ENCODE measurements at regions of chr12 and their contacts with region 1.

Region 1: GRCh38 chr12:120367233-120367923 is 1.6 kb downstream of the MSI1 start:
- DNase-seq: peak; percentile 65
- ATAC-seq: peak; percentile 7
- H3K4me3 Mint-ChIP-seq: peak overlapping the region; percentile 83
- H3K27ac Mint-ChIP-seq: peak overlapping the region; percentile 93
- H3K4me1 Mint-ChIP-seq: peaks cover 69% of the 10 kb centered on the region
- H3K27me3 Mint-ChIP-seq: peaks cover 29% of the 10 kb centered on the region
- CTCF ChIP-seq: peak; percentile 55

Region 2: DNA sequence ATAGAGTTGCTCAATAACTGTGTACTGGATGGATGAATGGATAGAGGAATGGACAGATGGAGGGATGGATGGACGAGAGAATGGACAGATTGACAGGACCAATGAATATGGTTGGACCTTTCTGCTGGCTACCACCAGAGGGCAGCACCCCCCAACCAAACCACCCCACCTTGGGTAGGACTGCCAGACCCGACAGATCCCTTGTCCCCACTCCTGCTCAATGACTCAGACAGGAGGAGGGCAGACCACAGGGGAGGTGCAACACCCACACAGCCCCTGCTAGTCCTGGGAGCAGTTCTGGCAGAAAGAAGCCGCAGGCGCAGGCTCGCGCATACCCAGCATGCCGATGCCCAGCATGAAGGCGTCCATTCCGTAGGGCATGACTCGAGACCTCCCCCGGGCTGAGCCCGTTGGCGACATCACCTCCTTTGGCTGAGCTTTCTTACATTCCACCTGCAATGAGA is 10.8 kb before region 1 on chr12:
- CTCF ChIA-PET with region 1: interaction called, 17 read pairs
- POLR2A ChIA-PET with region 1: interaction called, 6 read pairs
- DNase-seq: peak; percentile 86
- ATAC-seq: peak; percentile 60
- H3K4me3 Mint-ChIP-seq: no peak overlapping the region
- H3K27ac Mint-ChIP-seq: no peak overlapping the region
- H3K4me1 Mint-ChIP-seq: peaks cover 28% of the 10 kb centered on the region
- H3K27me3 Mint-ChIP-seq: no peaks in the 10 kb centered on the region
- CTCF ChIP-seq: peak; percentile 85

Region 3: DNA sequence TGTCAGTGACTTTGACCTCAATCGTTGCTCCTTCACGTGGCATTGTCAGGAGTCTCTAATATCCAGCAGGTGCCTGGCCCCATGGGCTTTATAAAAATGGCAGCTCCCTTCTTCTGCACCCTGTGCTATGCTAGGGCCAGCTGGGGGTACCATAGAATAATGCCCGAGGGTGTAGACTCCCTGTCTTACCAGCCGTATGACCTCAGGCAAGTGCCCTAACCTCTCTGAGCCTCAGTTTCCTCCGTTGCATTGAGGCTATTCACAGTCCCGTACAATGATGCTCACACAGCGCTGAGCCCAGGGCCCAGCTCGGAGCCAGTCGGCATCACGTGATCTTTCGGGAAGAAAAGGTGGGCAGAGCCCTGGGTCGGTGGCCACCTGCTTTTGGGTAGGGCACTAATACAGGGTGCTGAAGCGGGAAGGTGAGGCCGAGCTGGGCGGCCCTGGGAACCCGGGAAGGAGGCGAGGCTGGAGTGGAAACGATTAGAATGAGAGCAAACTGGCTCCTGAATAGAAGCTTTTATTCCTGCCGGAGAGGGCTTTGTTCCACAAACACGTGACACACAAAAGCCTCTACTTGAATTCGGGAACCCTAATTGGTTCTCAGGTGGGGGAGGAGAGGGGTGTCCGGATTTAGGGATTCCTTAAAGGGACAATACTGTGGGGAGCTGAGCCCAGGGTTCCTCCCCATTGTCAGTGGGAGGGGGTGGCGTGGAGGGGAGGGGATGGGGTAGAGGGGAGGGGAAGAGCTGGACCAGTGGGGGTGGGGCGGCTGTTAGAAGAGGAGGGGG is 21.5 kb after region 1 on chr12:
- CTCF ChIA-PET with region 1: interaction called, 25 read pairs
- POLR2A ChIA-PET with region 1: interaction called, 14 read pairs
- DNase-seq: peak; percentile 79
- ATAC-seq: peak; percentile 87
- H3K4me3 Mint-ChIP-seq: peak overlapping the region; percentile 66
- H3K27ac Mint-ChIP-seq: peak overlapping the region; percentile 96
- H3K4me1 Mint-ChIP-seq: peaks cover 33% of the 10 kb centered on the region
- H3K27me3 Mint-ChIP-seq: no peaks in the 10 kb centered on the region
- CTCF ChIP-seq: no peak

Region 4: GRCh38 chr12:120402217-120402616 is 34.8 kb after region 1 on chr12:
- CTCF ChIA-PET with region 1: interaction called, 24 read pairs
- POLR2A ChIA-PET with region 1: interaction called, 5 read pairs
- DNase-seq: peak; percentile 61
- ATAC-seq: peak; percentile 87
- H3K4me3 Mint-ChIP-seq: peak overlapping the region; percentile 56
- H3K27ac Mint-ChIP-seq: peak overlapping the region; percentile 94
- H3K4me1 Mint-ChIP-seq: peaks cover 23% of the 10 kb centered on the region
- H3K27me3 Mint-ChIP-seq: no peaks in the 10 kb centered on the region
- CTCF ChIP-seq: no peak

Region 5: GRCh38 chr12:120429368-120429767 is 62.0 kb after region 1 on chr12:
- CTCF ChIA-PET with region 1: interaction called, 74 read pairs
- POLR2A ChIA-PET with region 1: interaction called, 15 read pairs
- DNase-seq: no peak
- ATAC-seq: no peak
- H3K4me3 Mint-ChIP-seq: no peak overlapping the region
- H3K27ac Mint-ChIP-seq: no peak overlapping the region
- H3K4me1 Mint-ChIP-seq: peaks cover 8% of the 10 kb centered on the region
- H3K27me3 Mint-ChIP-seq: no peaks in the 10 kb centered on the region
- CTCF ChIP-seq: no peak

Region 6: DNA sequence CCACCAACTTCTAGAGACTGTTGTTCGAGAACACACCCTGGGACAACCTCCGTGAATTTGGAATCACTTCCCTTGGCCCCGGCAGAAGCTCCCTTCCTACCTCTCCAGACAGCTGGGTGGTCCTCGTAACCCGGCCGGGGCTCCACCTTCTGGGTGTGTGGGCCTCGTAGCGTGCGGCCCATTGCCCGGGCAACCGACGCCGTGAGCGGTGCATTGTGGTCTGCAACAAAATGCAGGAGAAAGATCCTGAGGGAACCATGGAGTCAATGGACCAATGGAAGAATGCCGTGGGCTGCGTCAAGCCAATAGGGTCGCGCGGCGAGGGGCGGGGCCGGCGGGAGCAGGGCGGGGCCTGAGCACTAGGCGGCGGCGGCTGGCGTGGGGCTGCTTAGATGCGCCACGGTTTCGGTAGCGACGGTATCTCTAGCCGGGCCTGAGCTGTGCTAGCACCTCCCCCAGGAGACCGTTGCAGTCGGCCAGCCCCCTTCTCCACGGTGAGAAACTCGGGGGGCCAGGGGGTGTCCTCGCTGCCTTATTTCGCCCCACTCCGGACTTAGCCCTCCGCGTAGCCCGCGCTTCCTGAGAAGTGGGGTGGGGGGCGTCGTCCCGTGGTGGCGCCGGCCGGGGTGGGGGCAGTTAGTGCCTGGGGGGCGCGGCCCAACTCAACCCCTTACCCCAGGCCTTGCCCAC is 128.5 kb after region 1 on chr12 and contains the start of gene DYNLL1:
- CTCF ChIA-PET with region 1: interaction called, 10 read pairs
- POLR2A ChIA-PET with region 1: no interaction called
- DNase-seq: peak; percentile 99
- ATAC-seq: peak; percentile 97
- H3K4me3 Mint-ChIP-seq: peak within 1 kb of the TSS; percentile 93
- H3K27ac Mint-ChIP-seq: peak within 1 kb of the TSS; percentile 98
- H3K4me1 Mint-ChIP-seq: peaks cover 33% of the 10 kb centered on the region
- H3K27me3 Mint-ChIP-seq: no peaks in the 10 kb centered on the region
- CTCF ChIP-seq: no peak
- total RNA-seq, gene DYNLL1: 327 to 470 TPM (median 463 TPM) in 3 replicates

Measured in WTC11 (cell line).